ENCODE measurements at regions of chr12 and their contacts with region 1.

Region 1: GRCh38 chr12:132003846-132004245 is 54.1 kb downstream of the EP400 start:
- DNase-seq: no peak
- ATAC-seq: no peak
- H3K4me3 ChIP-seq: no peak overlapping the region
- H3K27ac ChIP-seq: no peak overlapping the region
- H3K4me1 ChIP-seq: no peaks in the 10 kb centered on the region
- H3K27me3 ChIP-seq: no peaks in the 10 kb centered on the region
- CTCF ChIP-seq: no peak

Region 2: GRCh38 chr12:131104463-131105350 is 899.1 kb before region 1 on chr12:
- intact Hi-C with region 1: loop called in 1 of 3 experiments (anchors 10 kb)
- DNase-seq: peak; percentile 63 to 98 (median 86)
- ATAC-seq: peak; percentile 91 to 97 (median 96)
- H3K4me3 ChIP-seq: no peak overlapping the region
- H3K27ac ChIP-seq: no peak overlapping the region
- H3K4me1 ChIP-seq: no peaks in the 10 kb centered on the region
- H3K27me3 ChIP-seq: no peaks in the 10 kb centered on the region
- CTCF ChIP-seq: peak; percentile 70 to 90 (median 89)

Region 3: GRCh38 chr12:131684015-131684725 is 319.7 kb before region 1 on chr12:
- intact Hi-C with region 1: no loop called
- DNase-seq: no peak
- ATAC-seq: no peak
- H3K4me3 ChIP-seq: no peak overlapping the region
- H3K27ac ChIP-seq: no peak overlapping the region
- H3K4me1 ChIP-seq: no peaks in the 10 kb centered on the region
- H3K27me3 ChIP-seq: no peaks in the 10 kb centered on the region
- CTCF ChIP-seq: no peak

Region 4: DNA sequence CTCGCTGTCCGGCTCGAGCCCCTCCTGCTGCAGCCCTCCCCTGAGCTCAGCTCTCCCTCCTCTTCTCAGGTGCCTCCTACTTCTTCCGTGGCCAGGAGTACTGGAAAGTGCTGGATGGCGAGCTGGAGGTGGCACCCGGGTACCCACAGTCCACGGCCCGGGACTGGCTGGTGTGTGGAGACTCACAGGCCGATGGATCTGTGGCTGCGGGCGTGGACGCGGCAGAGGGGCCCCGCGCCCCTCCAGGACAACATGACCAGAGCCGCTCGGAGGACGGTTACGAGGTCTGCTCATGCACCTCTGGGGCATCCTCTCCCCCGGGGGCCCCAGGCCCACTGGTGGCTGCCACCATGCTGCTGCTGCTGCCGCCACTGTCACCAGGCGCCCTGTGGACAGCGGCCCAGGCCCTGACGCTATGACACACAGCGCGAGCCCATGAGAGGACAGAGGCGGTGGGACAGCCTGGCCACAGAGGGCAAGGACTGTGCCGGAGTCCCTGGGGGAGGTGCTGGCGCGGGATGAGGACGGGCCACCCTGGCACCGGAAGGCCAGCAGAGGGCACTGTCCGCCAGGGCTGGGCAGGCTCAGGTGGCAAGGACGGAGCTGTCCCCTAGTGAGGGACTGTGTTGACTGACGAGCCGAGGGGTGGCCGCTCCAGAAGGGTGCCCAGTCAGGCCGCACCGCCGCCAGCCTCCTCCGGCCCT is 152.8 kb before region 1 on chr12:
- intact Hi-C with region 1: loop called in 1 of 3 experiments (anchors 10 kb)
- DNase-seq: peak in 3 of 6 donors; percentile 38 to 90 (median 64)
- ATAC-seq: peak in 3 of 4 donors; percentile 24 to 98 (median 98)
- H3K4me3 ChIP-seq: peak overlapping the region in 1 of 4 donors; percentile 34
- H3K27ac ChIP-seq: no peak overlapping the region
- H3K4me1 ChIP-seq: no peaks in the 10 kb centered on the region
- H3K27me3 ChIP-seq: no peaks in the 10 kb centered on the region
- CTCF ChIP-seq: peak in 2 of 4 donors; percentile 45 to 93

Measured in pancreas (tissue), 10 donors.